ENCODE measurements at regions of chr12 and their contacts with region 1.

Region 1: DNA sequence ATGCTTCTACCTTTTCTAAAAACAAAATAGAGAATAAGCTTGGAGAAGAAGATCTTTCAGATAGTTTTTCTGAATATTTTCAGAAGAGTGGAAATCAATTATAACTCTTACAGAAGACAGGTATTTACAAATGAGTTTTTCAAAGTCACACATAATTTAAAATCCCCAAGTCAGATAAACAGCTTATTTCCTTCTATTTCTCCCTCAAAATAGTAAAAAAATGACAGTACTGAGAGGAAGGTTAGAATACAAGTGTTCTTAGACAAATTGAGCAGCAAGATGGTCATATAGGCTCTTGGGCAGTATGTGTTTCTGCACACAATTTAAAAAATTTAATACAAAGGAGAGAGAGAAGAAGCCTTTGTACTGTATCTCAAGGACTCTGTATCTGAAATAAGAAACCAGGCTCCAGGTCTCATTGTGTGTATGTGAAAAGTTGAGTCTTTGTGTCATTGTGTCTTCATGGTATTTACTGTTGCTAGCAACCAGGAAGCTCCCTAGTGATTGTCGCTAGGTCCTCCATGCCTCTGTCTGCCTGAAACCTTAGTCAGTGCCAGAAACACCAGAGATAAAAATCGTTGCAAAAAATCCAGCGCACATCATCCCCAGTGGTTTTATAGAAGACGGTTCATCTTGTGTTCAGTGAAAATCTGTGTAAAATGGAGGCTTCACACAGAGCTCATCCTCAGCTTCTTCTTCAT is 12.9 kb upstream of the TUBA1A start:
- DNase-seq: no peak
- H3K4me3 Mint-ChIP-seq: no peak overlapping the region
- H3K27ac Mint-ChIP-seq: peak overlapping the region; percentile 83
- H3K4me1 Mint-ChIP-seq: peaks cover 14% of the 10 kb centered on the region
- H3K27me3 Mint-ChIP-seq: no peaks in the 10 kb centered on the region
- CTCF ChIP-seq: no peak

Region 2: GRCh38 chr12:49170924-49171323 is 30.8 kb before region 1 on chr12:
- CTCF ChIA-PET with region 1: no interaction called
- intact Hi-C with region 1: no loop called
- DNase-seq: no peak
- H3K4me3 Mint-ChIP-seq: no peak overlapping the region
- H3K27ac Mint-ChIP-seq: no peak overlapping the region
- H3K4me1 Mint-ChIP-seq: no peaks in the 10 kb centered on the region
- H3K27me3 Mint-ChIP-seq: no peaks in the 10 kb centered on the region
- CTCF ChIP-seq: no peak

Region 3: GRCh38 chr12:49619281-49619680 is 417.5 kb after region 1 on chr12:
- CTCF ChIA-PET with region 1: interaction called, 10 read pairs
- intact Hi-C with region 1: no loop called
- DNase-seq: no peak
- H3K4me3 Mint-ChIP-seq: no peak overlapping the region
- H3K27ac Mint-ChIP-seq: peak overlapping the region; percentile 38
- H3K4me1 Mint-ChIP-seq: peaks cover 28% of the 10 kb centered on the region
- H3K27me3 Mint-ChIP-seq: no peaks in the 10 kb centered on the region
- CTCF ChIP-seq: no peak